ENCODE measurements at regions of chr3 and their contacts with region 1.

Region 1: DNA sequence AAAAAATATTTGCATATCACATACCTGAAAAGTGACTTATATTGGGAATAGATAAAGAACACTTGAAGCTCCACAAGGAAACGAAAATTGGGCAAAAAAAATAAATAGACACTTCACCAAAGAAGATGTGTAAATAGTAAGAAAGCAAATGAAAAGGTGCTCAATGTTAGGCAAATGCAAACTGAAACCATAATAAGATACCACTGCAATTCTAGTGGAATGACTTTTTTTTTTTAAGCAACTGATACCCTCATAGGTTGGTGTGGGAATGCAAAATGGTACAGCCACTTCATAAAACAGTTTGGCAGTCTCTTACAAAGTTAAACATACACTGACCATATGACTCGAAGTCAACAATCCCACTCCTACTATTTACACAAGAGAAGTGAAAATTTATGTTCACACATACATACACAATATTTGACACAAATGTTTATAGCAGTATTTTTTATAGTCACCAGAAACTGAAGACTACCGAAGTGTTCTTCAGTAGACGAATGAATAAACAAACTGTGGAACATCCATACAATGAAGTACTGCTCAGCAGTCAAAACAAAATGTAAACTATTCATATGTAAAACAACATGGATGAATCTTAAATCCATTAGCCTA is 176.3 kb downstream of the ZMAT3 start:
- DNase-seq: no peak
- H3K4me3 Mint-ChIP-seq: no peak overlapping the region
- H3K27ac Mint-ChIP-seq: no peak overlapping the region
- H3K4me1 Mint-ChIP-seq: no peaks in the 10 kb centered on the region
- H3K27me3 Mint-ChIP-seq: no peaks in the 10 kb centered on the region

Region 2: DNA sequence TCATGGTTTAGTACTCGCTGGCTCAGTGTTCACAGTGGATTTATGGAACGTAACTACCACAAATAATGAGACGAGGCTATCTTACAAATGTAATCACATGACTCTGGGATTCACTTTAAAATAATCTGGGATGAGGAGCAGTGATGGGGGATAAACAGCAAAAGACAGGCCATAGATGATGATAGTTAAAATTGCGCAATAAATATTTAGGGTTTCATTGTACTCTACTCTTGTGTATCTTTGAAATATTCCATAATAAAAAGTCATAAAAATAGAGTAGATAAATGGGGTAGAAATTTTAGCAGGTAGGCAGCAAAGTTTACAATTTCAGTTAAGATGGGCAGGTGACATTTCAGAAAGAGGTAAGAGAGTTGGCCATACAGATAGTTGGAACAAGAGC is 162.5 kb before region 1 on chr3:
- intact Hi-C with region 1: no loop called
- DNase-seq: no peak
- H3K4me3 Mint-ChIP-seq: no peak overlapping the region
- H3K27ac Mint-ChIP-seq: no peak overlapping the region
- H3K4me1 Mint-ChIP-seq: no peaks in the 10 kb centered on the region
- H3K27me3 Mint-ChIP-seq: no peaks in the 10 kb centered on the region

Region 3: GRCh38 chr3:178982137-178982536 is 86.9 kb after region 1 on chr3:
- intact Hi-C with region 1: no loop called
- DNase-seq: no peak
- H3K4me3 Mint-ChIP-seq: no peak overlapping the region
- H3K27ac Mint-ChIP-seq: no peak overlapping the region
- H3K4me1 Mint-ChIP-seq: no peaks in the 10 kb centered on the region
- H3K27me3 Mint-ChIP-seq: no peaks in the 10 kb centered on the region

Region 4: DNA sequence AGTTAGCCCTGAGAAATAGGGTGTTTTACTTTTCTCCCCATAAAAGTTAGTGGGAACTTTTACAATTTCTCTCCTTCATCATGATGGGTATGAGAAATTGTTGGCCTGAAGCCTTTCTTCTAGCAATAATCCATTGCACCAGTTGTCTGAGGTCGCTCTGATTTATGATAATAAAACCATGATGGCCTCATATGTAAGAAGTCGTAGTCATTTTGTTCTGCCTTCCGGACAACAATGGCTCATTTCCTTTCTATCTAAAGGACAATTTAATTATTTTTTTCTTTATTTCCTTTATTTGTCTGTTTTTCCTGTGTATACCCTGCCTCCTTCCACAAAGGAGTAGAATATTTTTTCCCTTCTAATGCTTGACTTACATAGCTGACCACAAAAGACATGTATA is 587.6 kb after region 1 on chr3:
- intact Hi-C with region 1: loop called (anchors 5 kb)
- DNase-seq: no peak
- H3K4me3 Mint-ChIP-seq: no peak overlapping the region
- H3K27ac Mint-ChIP-seq: no peak overlapping the region
- H3K4me1 Mint-ChIP-seq: no peaks in the 10 kb centered on the region
- H3K27me3 Mint-ChIP-seq: peaks cover 2% of the 10 kb centered on the region

Region 5: GRCh38 chr3:179493260-179493659 is 598.0 kb after region 1 on chr3:
- intact Hi-C with region 1: no loop called
- DNase-seq: no peak
- H3K4me3 Mint-ChIP-seq: no peak overlapping the region
- H3K27ac Mint-ChIP-seq: no peak overlapping the region
- H3K4me1 Mint-ChIP-seq: no peaks in the 10 kb centered on the region
- H3K27me3 Mint-ChIP-seq: peaks cover 2% of the 10 kb centered on the region

Measured in activated CD4-positive, alpha-beta T cell treated with anti-CD3 and anti-CD28 coated beads, Interleukin-2, amount 10 ng/mL, durations not matched to agents 24 days and 14 days (primary cell).